ENCODE measurements at regions of chr3 and their contacts with region 1.

Region 1: GRCh38 chr3:24160424-24161095 is 215.5 kb downstream of the NR1D2 start:
- DNase-seq: peak in 1 of 3 donors; percentile 49
- ATAC-seq: no peak
- H3K4me3 ChIP-seq: no peak overlapping the region
- H3K27ac ChIP-seq: no peak overlapping the region
- H3K4me1 ChIP-seq: peaks cover 2% of the 10 kb centered on the region
- H3K27me3 ChIP-seq: no peaks in the 10 kb centered on the region

Region 2: GRCh38 chr3:24582431-24583403 is 422.2 kb after region 1 on chr3:
- intact Hi-C with region 1: no loop called
- DNase-seq: no peak
- ATAC-seq: peak in 1 of 2 donors; percentile 41
- H3K4me3 ChIP-seq: no peak overlapping the region
- H3K27ac ChIP-seq: no peak overlapping the region
- H3K4me1 ChIP-seq: no peaks in the 10 kb centered on the region
- H3K27me3 ChIP-seq: no peaks in the 10 kb centered on the region

Region 3: GRCh38 chr3:25171118-25171807 is 1010.7 kb after region 1 on chr3:
- intact Hi-C with region 1: loop called in 1 of 4 experiments (anchors 10 kb)
- DNase-seq: no peak
- ATAC-seq: no peak
- H3K4me3 ChIP-seq: no peak overlapping the region
- H3K27ac ChIP-seq: no peak overlapping the region
- H3K4me1 ChIP-seq: no peaks in the 10 kb centered on the region
- H3K27me3 ChIP-seq: no peaks in the 10 kb centered on the region